ENCODE measurements at regions of chr3 and their contacts with region 1.

Region 1: DNA sequence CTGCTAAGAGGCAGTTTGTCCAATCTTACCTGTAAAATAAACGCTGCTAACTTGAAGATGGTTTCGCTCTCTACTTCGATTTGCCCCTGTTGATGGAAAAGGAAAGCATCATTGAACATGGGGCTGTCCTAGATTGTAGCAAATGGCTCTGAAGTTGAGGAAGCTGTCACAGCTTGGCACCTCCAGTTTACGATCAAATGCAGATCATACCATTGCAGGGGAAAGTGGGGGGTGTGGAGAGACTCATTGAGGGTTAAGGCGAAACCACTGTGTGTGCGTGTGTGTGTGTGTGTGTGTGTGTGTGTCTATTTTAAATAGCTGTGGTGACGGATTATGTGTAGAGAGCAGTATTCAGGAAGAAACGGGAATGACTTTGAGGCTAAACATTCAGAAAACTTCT is 127.6 kb upstream of the LMOD3 start:
- DNase-seq: peak; percentile 57
- ATAC-seq: peak; percentile 90
- H3K4me3 Mint-ChIP-seq: peak overlapping the region; percentile 54
- H3K27ac Mint-ChIP-seq: no peak overlapping the region
- H3K4me1 Mint-ChIP-seq: peaks cover 5% of the 10 kb centered on the region
- H3K27me3 Mint-ChIP-seq: no peaks in the 10 kb centered on the region
- CTCF ChIP-seq: no peak

Region 2: GRCh38 chr3:69260216-69260787 is 10.3 kb after region 1 on chr3:
- CTCF ChIA-PET with region 1: interaction called, 10 read pairs
- POLR2A ChIA-PET with region 1: no interaction called
- intact Hi-C with region 1: no loop called
- DNase-seq: no peak
- ATAC-seq: no peak
- H3K4me3 Mint-ChIP-seq: no peak overlapping the region
- H3K27ac Mint-ChIP-seq: no peak overlapping the region
- H3K4me1 Mint-ChIP-seq: no peaks in the 10 kb centered on the region
- H3K27me3 Mint-ChIP-seq: peaks cover 3% of the 10 kb centered on the region
- CTCF ChIP-seq: no peak

Region 3: DNA sequence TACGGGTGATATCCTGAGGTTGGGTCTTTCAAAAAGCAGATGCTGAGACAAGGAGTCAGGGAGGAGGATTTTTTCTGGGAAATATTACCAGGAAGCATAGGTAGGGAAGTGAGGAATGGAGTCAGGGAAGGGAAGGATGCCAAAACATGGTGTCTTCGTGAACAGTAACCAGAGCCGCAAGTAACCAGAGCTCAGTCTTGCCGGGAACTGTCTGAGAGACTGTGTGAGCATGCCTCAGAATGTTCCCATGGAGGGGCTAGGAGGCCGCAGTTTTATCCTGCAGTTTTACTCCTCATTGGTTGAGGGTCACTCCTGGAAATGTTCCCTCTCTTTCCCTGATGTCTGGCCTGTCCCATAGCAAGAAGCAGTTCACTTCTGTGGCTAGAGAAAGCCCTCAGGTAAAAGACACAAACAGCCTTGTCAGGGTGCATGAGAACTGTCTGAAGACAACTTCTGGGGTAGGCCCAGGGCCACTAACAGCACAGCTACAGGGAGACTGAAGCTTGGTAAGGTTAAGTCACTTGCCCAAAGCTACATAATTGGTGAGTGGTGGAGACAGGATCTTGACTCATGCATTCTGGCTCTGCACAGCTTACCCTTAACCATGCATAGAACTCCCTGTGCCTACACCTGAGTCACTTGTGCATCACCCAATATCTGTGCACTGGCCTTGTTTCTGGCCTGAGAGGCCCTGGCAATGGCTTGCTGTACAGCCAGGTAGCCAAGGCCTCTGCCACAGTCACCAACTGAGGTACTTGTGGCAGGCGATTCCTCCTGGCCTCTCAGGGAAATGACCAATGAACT is 212.2 kb after region 1 on chr3:
- CTCF ChIA-PET with region 1: no interaction called
- POLR2A ChIA-PET with region 1: no interaction called
- intact Hi-C with region 1: no loop called
- DNase-seq: no peak
- ATAC-seq: no peak
- H3K4me3 Mint-ChIP-seq: no peak overlapping the region
- H3K27ac Mint-ChIP-seq: no peak overlapping the region
- H3K4me1 Mint-ChIP-seq: no peaks in the 10 kb centered on the region
- H3K27me3 Mint-ChIP-seq: peaks cover 7% of the 10 kb centered on the region
- CTCF ChIP-seq: no peak